ENCODE measurements at regions of chr1 and their contacts with region 1.

Region 1: GRCh38 chr1:37288900-37289299 is 185.5 kb upstream of the ZC3H12A start:
- DNase-seq: peak; percentile 98
- H3K4me3 ChIP-seq: peak overlapping the region; percentile 32
- H3K27ac ChIP-seq: peak overlapping the region; percentile 91
- H3K4me1 ChIP-seq: peaks cover 61% of the 10 kb centered on the region
- CTCF ChIP-seq: no peak

Region 2: GRCh38 chr1:36885538-36886357 is 403.2 kb before region 1 on chr1:
- CTCF ChIA-PET with region 1: no interaction called
- POLR2A ChIA-PET with region 1: no interaction called
- intact Hi-C with region 1: loop called (anchors 10 kb)
- DNase-seq: no peak
- H3K4me3 ChIP-seq: peak overlapping the region; percentile 37
- H3K27ac ChIP-seq: peak overlapping the region; percentile 92
- H3K4me1 ChIP-seq: peaks cover 75% of the 10 kb centered on the region
- CTCF ChIP-seq: peak; percentile 39; the same call in 1 of the 2 replicates

Region 3: GRCh38 chr1:37258068-37258467 is 30.8 kb before region 1 on chr1:
- CTCF ChIA-PET with region 1: no interaction called
- POLR2A ChIA-PET with region 1: no interaction called
- intact Hi-C with region 1: no loop called
- DNase-seq: no peak
- H3K4me3 ChIP-seq: no peak overlapping the region
- H3K27ac ChIP-seq: no peak overlapping the region
- H3K4me1 ChIP-seq: no peaks in the 10 kb centered on the region
- CTCF ChIP-seq: no peak

Region 4: DNA sequence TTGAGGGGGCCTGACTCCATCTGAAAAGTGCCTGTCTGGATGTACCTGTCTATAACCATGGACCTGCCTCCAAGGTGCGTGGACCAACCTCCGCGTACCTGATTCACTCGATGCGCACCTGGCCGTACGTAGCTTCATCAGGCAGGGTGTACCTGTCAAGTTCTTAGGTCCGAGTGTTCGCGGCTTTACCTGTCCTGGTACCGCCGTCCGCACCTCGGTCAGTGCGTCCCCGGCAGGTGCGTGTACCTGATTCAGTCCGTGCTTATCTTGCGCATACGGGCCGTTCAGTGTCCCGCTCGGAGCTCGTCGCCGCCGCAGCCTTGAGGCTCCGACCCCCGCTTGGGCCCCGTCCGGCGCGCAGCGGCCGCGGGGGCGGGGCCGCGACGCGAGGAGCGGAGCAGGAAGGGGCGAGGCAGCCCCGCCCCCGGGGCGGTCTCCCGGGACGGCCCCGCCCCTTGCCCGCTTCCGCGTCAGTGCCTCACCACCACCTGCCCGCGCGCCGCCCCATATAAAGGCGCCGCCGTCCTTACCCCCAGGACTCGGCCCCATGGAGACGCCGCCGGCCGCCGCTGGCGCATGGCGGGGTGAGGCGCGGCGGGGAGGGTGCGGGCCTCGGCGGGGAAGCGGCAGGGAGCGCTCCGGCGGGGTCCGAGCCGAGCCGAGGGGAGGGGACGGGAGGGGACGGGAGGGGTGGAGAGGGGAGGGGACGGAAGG is 185.3 kb after region 1 on chr1 and contains the start of gene ZC3H12A:
- CTCF ChIA-PET with region 1: no interaction called
- POLR2A ChIA-PET with region 1: no interaction called
- intact Hi-C with region 1: loop called (anchors 1 kb)
- DNase-seq: peak; percentile 92
- H3K4me3 ChIP-seq: peak within 1 kb of the TSS; percentile 78
- H3K27ac ChIP-seq: peak within 1 kb of the TSS; percentile 78
- H3K4me1 ChIP-seq: peaks cover 47% of the 10 kb centered on the region
- CTCF ChIP-seq: no peak; the same call in 1 of the 2 replicates
- total RNA-seq, gene ZC3H12A: 11.2 and 20.7 TPM in 2 replicates

Region 5: GRCh38 chr1:37556712-37557196 is 267.9 kb after region 1 on chr1 and contains the start of gene DNALI1:
- CTCF ChIA-PET with region 1: no interaction called
- POLR2A ChIA-PET with region 1: no interaction called
- intact Hi-C with region 1: no loop called
- DNase-seq: peak; percentile 24
- H3K4me3 ChIP-seq: no peak within 1 kb of the TSS
- H3K27ac ChIP-seq: no peak within 1 kb of the TSS
- H3K4me1 ChIP-seq: peaks cover 12% of the 10 kb centered on the region
- CTCF ChIP-seq: no peak
- total RNA-seq, gene DNALI1: not detected in 2 replicates

Measured in OCI-LY7 (cell line).